SK-N-SH (cell line): ENCODE measurements at regions of chr20 and their contacts with region 1.

Region 1: DNA sequence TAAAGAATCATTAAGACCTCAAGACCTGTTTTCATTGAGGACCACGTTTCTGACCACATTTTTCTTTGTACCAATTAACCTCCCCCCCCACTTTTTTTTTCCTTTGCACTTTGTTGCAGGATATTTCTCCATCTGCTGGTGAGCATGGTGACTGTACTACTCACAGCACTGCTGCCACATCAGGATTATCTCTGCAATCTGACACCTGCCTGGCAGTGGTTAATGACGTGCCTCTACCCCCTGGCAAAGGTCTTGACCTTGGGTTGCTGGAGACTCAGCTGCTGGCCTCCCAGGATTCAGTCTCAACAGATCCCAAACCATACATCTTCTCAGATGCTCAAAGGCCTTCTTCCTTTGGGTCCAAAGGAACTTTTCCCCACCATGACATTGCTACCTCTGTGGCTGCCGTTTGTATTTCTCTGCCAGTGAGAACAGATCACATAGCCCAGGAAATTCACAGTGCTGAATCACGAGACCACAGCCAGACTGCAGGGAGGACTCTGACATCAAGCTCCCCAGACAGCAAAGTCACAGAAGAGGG is 46.6 kb upstream of the EDN3 start:
- DNase-seq: peak; percentile 13
- H3K4me3 ChIP-seq: no peak overlapping the region
- H3K27ac ChIP-seq: no peak overlapping the region
- H3K4me1 ChIP-seq: peaks cover 0 to 6% of the 10 kb centered on the region in 2 experiments; a peak in 1 of 4 replicates
- H3K27me3 ChIP-seq: no peaks in the 10 kb centered on the region; the same call in 1 of the 2 replicates
- CTCF ChIP-seq: no peak
- EP300 ChIP-seq: no peak
- RAD21 ChIP-seq: peak; percentile 18; the same call in 1 of the 2 replicates

Region 2: GRCh38 chr20:59184880-59185447 is 68.9 kb before region 1 on chr20:
- CTCF ChIA-PET with region 1: no interaction called
- POLR2A ChIA-PET with region 1: no interaction called
- DNase-seq: no peak
- H3K4me3 ChIP-seq: no peak overlapping the region
- H3K27ac ChIP-seq: no peak overlapping the region
- H3K4me1 ChIP-seq: no peaks in the 10 kb centered on the region
- H3K27me3 ChIP-seq: no peaks in the 10 kb centered on the region
- CTCF ChIP-seq: no peak
- EP300 ChIP-seq: no peak
- RAD21 ChIP-seq: no peak

Region 3: DNA sequence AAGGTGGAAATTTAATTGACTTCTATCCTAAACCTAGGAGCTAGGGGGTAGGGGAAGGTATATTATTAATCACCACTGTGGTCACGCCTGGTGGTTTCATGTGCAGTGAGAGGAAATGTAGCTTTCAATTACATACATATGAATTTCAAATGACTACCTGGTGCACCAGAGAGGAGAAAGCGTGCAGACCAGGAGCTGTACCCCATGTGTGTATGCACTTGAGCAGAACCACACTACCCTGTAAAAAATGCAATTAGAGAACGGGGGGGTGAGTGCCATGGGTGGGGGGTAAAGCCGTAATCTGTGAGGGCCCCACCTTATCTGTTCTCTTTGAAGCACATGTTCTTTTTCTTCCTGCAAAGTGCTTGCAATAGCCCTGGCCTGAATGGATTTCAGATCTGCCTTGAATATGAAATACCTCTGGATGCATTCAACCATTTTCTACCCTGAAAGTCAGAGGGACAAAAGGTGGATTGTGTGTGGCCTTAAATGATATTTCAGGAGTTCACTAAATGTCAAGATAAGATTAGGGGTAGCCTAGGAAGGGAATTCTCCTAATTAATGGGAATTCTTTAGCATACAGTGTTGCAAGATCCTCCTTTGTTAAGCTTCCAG is 15.7 kb after region 1 on chr20:
- CTCF ChIA-PET with region 1: interaction called, 11 read pairs
- POLR2A ChIA-PET with region 1: no interaction called
- DNase-seq: peak; percentile 25
- H3K4me3 ChIP-seq: no peak overlapping the region
- H3K27ac ChIP-seq: no peak overlapping the region
- H3K4me1 ChIP-seq: peaks cover 0 to 3% of the 10 kb centered on the region in 2 experiments; a peak in 1 of 4 replicates
- H3K27me3 ChIP-seq: no peaks in the 10 kb centered on the region; the same call in 1 of the 2 replicates
- CTCF ChIP-seq: no peak
- EP300 ChIP-seq: no peak
- RAD21 ChIP-seq: no peak

Region 4: GRCh38 chr20:59291710-59292109 is 37.9 kb after region 1 on chr20:
- CTCF ChIA-PET with region 1: no interaction called
- POLR2A ChIA-PET with region 1: no interaction called
- DNase-seq: no peak
- H3K4me3 ChIP-seq: no peak overlapping the region
- H3K27ac ChIP-seq: no peak overlapping the region
- H3K4me1 ChIP-seq: peaks cover 0 to 11% of the 10 kb centered on the region in 2 experiments; a peak in 1 of 4 replicates
- H3K27me3 ChIP-seq: no peaks in the 10 kb centered on the region
- CTCF ChIP-seq: no peak
- EP300 ChIP-seq: no peak
- RAD21 ChIP-seq: no peak